ENCODE measurements at regions of chr10 and their contacts with region 1.

Region 1: GRCh38 chr10:22244001-22244400 is 26.2 kb upstream of the EBLN1 start:
- DNase-seq: no peak
- ATAC-seq: no peak
- H3K4me3 Mint-ChIP-seq: no peak overlapping the region
- H3K27ac Mint-ChIP-seq: no peak overlapping the region
- H3K4me1 Mint-ChIP-seq: peaks cover 19% of the 10 kb centered on the region
- H3K27me3 Mint-ChIP-seq: peaks cover 23% of the 10 kb centered on the region

Region 2: DNA sequence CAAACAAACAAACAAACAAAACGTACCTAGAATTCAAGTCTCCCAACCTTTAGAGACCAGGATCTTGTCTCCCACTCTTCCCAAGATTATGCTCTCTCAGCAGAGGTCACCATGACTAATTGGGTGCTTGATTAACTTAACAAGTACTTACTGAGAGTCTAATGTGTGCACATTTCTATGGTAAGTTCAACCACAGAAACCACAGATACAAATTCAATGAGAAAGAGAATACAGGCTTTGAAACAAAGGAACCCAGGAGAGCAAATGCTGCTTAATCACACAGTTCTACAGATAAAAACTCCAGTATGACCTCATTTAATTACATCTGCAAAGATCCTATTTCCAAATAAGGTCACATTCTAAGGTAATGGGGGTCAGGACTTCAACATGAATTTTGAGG is 383.3 kb before region 1 on chr10:
- CTCF ChIA-PET with region 1: no interaction called
- DNase-seq: no peak
- ATAC-seq: no peak
- H3K4me3 Mint-ChIP-seq: no peak overlapping the region
- H3K27ac Mint-ChIP-seq: no peak overlapping the region
- H3K4me1 Mint-ChIP-seq: peaks cover 7% of the 10 kb centered on the region
- H3K27me3 Mint-ChIP-seq: no peaks in the 10 kb centered on the region

Region 3: DNA sequence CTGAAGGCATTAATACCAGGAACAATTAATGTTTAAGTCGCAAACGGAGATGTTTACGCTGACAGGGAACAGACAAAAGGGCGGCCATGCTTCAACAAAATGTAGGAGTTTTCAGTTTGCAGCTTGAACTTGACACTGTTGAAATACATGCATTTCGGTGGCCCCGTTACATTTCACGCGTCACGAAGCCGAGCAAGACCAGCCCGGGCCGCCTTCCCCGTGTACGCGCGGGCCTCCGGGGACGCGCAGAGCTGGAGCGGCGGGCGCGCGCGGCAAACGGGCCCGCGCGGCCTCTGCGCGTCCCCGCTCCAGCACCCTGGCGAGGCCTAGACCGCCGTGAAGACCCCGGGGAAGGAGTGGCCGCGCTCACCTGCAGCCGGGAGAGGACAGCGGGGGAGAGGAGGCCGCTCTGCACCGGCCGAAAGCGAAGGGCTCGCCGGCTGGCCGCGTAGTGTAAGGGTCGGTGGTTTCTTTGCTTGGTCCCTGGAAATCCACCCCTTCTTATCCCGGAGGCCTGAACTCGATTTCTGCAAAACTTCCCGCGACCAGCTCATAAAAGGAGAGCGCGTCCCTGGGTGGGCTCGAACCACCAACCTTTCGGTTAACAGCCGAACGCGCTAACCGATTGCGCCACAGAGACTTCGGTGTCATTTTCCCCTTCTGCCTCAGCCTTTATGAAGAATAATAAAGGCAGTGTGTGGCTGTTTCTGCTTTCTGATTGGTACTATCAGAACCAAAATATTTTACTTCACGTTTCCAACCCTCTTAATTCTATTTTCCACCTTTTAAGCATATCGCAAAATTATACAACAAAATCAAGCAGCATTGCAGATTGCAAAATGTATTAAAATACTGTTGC is 14.8 kb before region 1 on chr10:
- CTCF ChIA-PET with region 1: interaction called, 10 read pairs
- DNase-seq: peak; percentile 89
- ATAC-seq: peak; percentile 82
- H3K4me3 Mint-ChIP-seq: peak overlapping the region; percentile 79
- H3K27ac Mint-ChIP-seq: peak overlapping the region; percentile 92
- H3K4me1 Mint-ChIP-seq: peaks cover 20% of the 10 kb centered on the region
- H3K27me3 Mint-ChIP-seq: peaks cover 28% of the 10 kb centered on the region

Region 4: GRCh38 chr10:22325272-22326144 is 81.5 kb after region 1 on chr10:
- CTCF ChIA-PET with region 1: no interaction called
- DNase-seq: peak; percentile 80
- ATAC-seq: peak; percentile 58
- H3K4me3 Mint-ChIP-seq: peak overlapping the region; percentile 79
- H3K27ac Mint-ChIP-seq: peak overlapping the region; percentile 48
- H3K4me1 Mint-ChIP-seq: peaks cover 39% of the 10 kb centered on the region
- H3K27me3 Mint-ChIP-seq: peaks cover 33% of the 10 kb centered on the region

Measured in activated CD8-positive, alpha-beta memory T cell treated with anti-CD3 and anti-CD28 coated beads, Interleukin-2, amount 10 ng/mL, durations not matched to agents 7 days and 5 days (primary cell).